Natural killer cell (primary cell): ENCODE measurements at regions of chr6 and their contacts with region 1.

Region 1: DNA sequence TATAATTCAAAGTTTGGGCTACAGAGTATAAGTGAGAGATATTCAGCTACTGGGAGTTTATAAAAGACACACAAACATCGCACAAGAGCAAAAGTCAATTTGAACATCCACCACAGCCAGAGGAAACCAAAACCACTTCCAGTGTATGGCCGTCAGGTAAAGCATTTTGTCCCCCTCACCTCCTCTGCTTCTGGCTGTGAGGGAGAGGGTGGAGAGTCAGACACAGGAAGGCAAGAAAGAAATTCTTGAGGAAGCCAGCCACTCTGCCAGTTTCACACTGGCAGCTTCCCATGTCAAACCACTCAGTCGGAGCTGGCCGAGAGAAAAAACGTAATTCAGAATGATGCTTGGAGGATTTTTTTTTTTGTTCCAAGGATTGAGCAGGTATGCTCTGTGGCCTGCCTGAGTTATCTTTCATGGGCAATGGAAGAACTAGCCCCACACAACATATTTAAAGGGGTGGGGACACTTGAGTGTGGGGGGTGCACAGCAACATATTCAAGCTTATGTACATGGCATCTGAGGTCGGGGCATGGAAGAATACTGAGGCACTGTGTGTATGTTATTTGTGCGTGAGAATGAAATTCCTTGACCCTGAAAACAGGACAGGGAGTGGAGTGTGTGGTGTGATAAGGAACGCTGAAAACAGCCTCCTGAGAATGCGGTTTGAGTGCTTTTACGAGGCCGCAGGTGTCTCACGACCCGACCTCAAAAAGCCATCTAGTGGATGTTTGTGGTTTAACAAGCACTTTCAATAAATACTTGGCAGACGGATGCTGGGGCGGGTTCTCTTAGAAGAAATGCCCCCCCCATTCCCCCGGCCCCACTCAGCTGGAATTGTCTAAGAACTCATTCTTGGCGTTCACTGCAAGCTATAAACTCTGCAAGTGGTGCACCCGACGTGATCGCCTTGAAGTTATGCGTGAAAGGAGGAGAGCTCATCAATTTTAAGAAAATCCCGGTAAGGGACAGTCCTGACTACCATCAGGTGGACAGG is 27.5 kb upstream of the ZBTB22 start:
- DNase-seq: peak; percentile 52 to 93
- ATAC-seq: peak; percentile 53 to 66 (median 54)
- H3K4me3 ChIP-seq: peak overlapping the region; percentile 21
- H3K4me3 Mint-ChIP-seq: peak overlapping the region; percentile 85
- H3K27ac ChIP-seq: peak overlapping the region; percentile 89
- H3K27ac Mint-ChIP-seq: peak overlapping the region; percentile 90 to 94
- H3K4me1 ChIP-seq: peaks cover 50% of the 10 kb centered on the region
- H3K4me1 Mint-ChIP-seq: peaks cover 25 to 31% of the 10 kb centered on the region in 2 donors
- H3K27me3 ChIP-seq: no peaks in the 10 kb centered on the region
- H3K27me3 Mint-ChIP-seq: no peaks in the 10 kb centered on the region
- CTCF ChIP-seq: peak; percentile 73

Region 2: GRCh38 chr6:33276864-33277662 is 67.9 kb before region 1 on chr6 and contains the start of gene B3GALT4:
- intact Hi-C with region 1: loop called (anchors 2 kb)
- DNase-seq: peak; percentile 68 to 86
- ATAC-seq: peak; percentile 73 to 83 (median 76)
- H3K4me3 ChIP-seq: peak within 1 kb of the TSS; percentile 82
- H3K4me3 Mint-ChIP-seq: peak within 1 kb of the TSS; percentile 94
- H3K27ac ChIP-seq: peak within 1 kb of the TSS; percentile 90
- H3K27ac Mint-ChIP-seq: peak within 1 kb of the TSS; percentile 90 to 91
- H3K4me1 ChIP-seq: peaks cover 63% of the 10 kb centered on the region
- H3K4me1 Mint-ChIP-seq: peaks cover 48 to 71% of the 10 kb centered on the region in 2 donors
- H3K27me3 ChIP-seq: no peaks in the 10 kb centered on the region
- H3K27me3 Mint-ChIP-seq: no peaks in the 10 kb centered on the region
- CTCF ChIP-seq: peak; percentile 61
- total RNA-seq, gene B3GALT4: 22.7 to 24.1 (median 23.1) TPM

Region 3: DNA sequence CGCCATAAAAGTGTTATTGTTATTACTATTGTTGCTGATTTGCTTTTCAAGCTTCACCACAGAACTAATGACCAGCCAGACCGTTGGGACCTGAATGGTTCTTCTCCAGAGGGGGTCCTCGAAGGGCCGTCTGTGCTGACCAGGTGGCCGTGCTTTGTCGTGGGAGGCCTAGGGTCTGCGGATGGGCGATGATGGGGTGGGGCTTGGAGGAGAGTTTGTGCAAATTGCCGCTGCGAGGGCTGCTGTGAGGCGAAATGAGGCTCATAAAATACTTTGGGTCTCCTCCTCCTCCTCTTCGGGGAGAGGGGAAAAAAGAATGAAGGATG is 21.4 kb before region 1 on chr6:
- intact Hi-C with region 1: loop called (anchors 1 kb)
- DNase-seq: no peak
- ATAC-seq: no peak
- H3K4me3 ChIP-seq: peak overlapping the region; percentile 67
- H3K4me3 Mint-ChIP-seq: peak overlapping the region; percentile 99
- H3K27ac ChIP-seq: peak overlapping the region; percentile 85
- H3K27ac Mint-ChIP-seq: peak overlapping the region; percentile 98
- H3K4me1 ChIP-seq: peaks cover 46% of the 10 kb centered on the region
- H3K4me1 Mint-ChIP-seq: peaks cover 50 to 57% of the 10 kb centered on the region in 2 donors
- H3K27me3 ChIP-seq: no peaks in the 10 kb centered on the region
- H3K27me3 Mint-ChIP-seq: no peaks in the 10 kb centered on the region
- CTCF ChIP-seq: no peak

Region 4: DNA sequence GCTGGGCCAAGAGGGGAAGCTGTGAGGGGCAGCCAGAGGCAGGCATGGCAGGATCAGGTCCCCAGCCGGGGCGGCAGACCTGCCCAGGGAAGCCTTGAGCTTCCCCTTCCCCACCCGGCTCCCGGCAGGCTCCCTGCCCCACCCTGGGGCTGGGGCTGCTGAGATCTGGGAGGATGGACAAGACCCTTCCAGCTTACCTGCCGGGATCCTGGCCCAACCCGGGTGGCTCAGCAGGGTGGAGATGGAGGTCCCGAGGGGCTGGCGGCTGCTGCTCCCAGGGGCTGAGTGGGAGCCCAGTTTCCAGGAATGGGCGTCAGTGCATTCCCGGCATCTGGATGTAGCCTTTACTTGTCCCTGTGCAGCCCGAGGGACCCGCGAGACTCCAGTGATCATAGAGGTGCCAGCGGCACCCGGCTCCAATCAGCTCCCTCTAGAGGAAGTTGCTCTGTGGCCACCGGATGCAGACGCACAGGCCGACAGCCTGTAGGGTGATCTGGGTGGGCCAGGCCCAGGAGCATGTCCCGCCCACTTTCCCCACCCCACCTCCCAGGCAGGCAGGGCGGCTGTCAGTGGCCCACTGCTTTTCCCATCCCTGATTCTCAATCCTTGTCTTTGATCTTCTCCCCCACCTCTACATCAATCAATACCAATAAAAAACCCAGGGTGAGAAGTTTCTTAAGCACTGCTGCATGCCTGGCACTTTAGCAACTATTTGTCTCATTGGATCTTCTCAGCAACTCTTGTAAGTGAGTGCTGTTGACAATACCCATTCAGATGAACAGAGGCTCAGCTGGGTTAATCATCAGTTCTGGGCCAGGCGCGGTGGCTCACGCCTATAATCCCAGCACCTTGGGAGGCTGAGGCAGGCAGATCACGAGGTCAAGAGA is 235.1 kb after region 1 on chr6 and contains the start of gene BAK1:
- intact Hi-C with region 1: loop called (anchors 10 kb)
- DNase-seq: peak; percentile 77 to 92
- ATAC-seq: peak; percentile 96 to 98 (median 98)
- H3K4me3 ChIP-seq: peak within 1 kb of the TSS; percentile 85
- H3K4me3 Mint-ChIP-seq: peak within 1 kb of the TSS; percentile 92
- H3K27ac ChIP-seq: peak within 1 kb of the TSS; percentile 81
- H3K27ac Mint-ChIP-seq: peak within 1 kb of the TSS; percentile 91 to 99
- H3K4me1 ChIP-seq: peaks cover 35% of the 10 kb centered on the region
- H3K4me1 Mint-ChIP-seq: peaks cover 14 to 36% of the 10 kb centered on the region in 2 donors
- H3K27me3 ChIP-seq: no peaks in the 10 kb centered on the region
- H3K27me3 Mint-ChIP-seq: no peaks in the 10 kb centered on the region
- CTCF ChIP-seq: peak; percentile 47
- total RNA-seq, gene BAK1: 36.3 to 49.8 (median 40.7) TPM